AG04450 (cell line): ENCODE measurements at regions of chr14 and their contacts with region 1.

Region 1: DNA sequence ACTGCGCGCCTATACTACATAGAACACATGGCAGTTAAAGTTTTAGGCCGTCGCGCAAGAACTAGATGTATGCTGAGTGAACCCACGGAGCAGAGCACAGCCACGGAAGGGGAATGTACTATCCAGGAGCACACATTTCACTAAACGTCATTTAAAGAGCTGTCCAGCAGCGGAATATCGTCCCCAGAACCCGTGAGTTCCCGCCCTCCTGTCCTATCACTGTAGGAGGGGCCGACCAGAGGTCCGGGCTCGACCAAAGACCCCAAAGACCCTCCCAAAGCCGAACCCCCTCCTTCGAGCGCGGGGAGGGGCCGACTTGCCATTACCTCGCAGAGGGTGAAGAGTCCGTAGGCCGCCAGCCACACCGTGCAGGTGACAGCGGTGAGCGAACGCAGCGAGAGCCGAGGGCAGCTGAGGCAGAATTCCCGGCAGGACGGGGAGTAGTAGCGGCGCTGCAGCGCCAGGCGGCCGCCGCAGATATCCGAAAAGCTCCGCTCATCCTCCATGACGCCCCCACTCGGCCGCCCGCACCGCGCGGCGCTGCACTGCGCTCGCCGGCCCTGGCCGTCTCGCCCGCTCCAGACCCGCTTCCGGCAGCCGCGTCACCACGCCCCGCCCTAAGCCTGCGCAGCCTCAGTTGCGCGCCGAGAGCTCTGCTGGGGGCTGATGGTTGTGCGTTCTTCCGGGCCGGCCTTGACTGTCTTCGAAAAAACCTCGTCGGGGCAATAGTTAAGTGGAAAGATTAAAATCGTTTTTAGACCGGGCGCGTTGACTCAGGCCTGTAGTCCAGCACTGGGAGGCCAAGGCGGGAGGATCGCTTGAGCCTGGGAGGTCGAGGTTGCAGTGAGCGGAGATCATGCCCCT is at the start of gene PIGH:
- DNase-seq: peak; percentile 46
- H3K4me3 ChIP-seq: peak within 1 kb of the TSS; percentile 83
- H3K27ac ChIP-seq: peak within 1 kb of the TSS; percentile 68
- H3K27me3 ChIP-seq: no peaks in the 10 kb centered on the region
- CTCF ChIP-seq: peak; percentile 56
- polyA plus RNA-seq, gene PIGH: 16.0 and 17.6 TPM in 2 replicates

Region 2: GRCh38 chr14:67426983-67427606 is 172.8 kb before region 1 on chr14:
- CTCF ChIA-PET with region 1: interaction called, 16 read pairs
- POLR2A ChIA-PET with region 1: no interaction called
- DNase-seq: peak; percentile 45
- H3K4me3 ChIP-seq: no peak overlapping the region
- H3K27ac ChIP-seq: no peak overlapping the region
- H3K27me3 ChIP-seq: peaks cover 10% of the 10 kb centered on the region
- CTCF ChIP-seq: peak; percentile 86

Region 3: DNA sequence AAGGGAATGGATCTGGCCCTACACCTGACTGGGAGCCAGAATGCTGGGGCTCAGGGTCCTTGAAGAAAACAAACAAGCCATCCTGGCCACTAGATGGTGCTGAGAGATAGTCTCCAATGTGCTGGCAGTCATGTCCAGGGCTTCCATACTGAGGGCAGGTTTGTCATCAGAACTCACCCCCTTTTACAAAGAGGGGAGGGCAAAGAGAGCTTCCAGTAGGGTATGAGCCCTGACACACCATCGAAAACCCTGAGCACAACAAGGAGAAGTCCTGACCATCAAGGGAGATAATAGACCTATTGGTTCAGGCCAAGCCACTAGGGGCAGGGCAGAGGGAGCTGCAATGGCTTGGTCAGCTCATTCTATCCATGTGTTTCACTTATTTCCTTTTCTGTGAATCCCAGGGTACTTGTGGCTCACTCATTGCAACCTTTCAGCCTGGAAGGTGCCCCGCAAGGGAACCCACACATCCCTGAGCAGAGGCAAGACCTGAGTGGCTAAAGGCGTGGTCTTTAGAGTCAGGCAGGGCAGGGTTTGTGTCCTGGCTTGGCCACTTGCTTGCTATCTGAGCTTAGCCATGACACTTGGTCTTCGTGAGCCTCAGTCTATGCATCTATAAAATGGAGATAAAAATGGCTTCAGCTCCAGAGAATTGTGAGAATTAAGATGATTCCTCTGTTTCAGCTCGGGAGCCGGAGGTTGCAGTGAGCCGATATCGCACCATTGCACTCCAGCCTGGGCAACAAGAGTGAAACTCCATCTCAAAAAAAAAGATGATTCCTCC is 73.1 kb before region 1 on chr14:
- CTCF ChIA-PET with region 1: interaction called, 10 read pairs
- POLR2A ChIA-PET with region 1: no interaction called
- DNase-seq: no peak
- H3K4me3 ChIP-seq: no peak overlapping the region
- H3K27ac ChIP-seq: no peak overlapping the region
- H3K27me3 ChIP-seq: peaks cover 38% of the 10 kb centered on the region
- CTCF ChIP-seq: peak; percentile 72

Region 4: DNA sequence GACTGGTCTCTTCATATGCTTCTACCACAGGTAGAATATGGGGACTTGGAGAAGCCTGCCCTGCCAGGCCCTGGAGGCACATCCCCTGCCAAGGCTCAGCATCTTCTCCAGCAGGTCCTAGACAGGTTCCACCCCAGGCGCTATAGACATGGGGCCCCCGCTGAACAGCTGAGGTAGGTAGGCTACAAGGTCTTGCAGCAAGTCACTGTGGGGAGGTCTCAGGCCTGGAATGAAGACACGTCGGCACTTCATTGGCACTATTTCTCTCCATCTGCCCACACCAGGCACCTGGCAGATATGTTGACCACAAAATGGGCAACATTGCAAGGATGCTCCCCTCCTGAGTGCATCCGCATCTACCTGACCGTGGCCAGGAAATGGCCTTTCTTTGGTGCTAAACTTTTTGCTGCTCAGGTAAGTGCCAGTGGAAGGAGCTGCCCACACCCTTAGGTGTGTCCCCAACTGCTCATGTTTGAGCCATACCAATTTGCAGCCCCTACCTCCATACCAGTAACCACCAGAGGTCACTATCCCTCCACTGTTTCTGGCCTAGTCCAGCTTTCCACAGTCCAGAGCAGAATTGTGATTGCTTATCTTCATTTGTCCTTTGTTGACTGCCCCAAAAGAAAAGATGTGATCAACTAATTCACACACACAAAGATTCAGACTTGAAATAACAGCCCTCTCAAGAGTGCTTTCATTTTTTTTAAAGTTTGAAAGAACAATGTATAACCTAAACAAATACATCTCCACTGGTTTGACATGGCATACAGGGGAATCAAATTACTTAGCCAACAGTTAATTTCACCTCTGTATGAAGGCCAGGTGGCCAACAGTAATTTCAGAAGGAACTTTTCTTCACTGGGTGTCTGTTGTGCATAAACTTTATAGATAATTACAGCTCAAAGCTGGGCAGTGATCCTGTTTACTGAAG is 16.0 kb before region 1 on chr14:
- CTCF ChIA-PET with region 1: interaction called, 10 read pairs
- POLR2A ChIA-PET with region 1: no interaction called
- DNase-seq: no peak
- H3K4me3 ChIP-seq: no peak overlapping the region
- H3K27ac ChIP-seq: no peak overlapping the region
- H3K27me3 ChIP-seq: peaks cover 5% of the 10 kb centered on the region
- CTCF ChIP-seq: peak; percentile 85

Region 5: GRCh38 chr14:67589204-67589770 is 10.6 kb before region 1 on chr14:
- CTCF ChIA-PET with region 1: interaction called, 14 read pairs
- POLR2A ChIA-PET with region 1: no interaction called
- DNase-seq: no peak
- H3K4me3 ChIP-seq: no peak overlapping the region
- H3K27ac ChIP-seq: no peak overlapping the region
- H3K27me3 ChIP-seq: no peaks in the 10 kb centered on the region
- CTCF ChIP-seq: no peak

Region 6: DNA sequence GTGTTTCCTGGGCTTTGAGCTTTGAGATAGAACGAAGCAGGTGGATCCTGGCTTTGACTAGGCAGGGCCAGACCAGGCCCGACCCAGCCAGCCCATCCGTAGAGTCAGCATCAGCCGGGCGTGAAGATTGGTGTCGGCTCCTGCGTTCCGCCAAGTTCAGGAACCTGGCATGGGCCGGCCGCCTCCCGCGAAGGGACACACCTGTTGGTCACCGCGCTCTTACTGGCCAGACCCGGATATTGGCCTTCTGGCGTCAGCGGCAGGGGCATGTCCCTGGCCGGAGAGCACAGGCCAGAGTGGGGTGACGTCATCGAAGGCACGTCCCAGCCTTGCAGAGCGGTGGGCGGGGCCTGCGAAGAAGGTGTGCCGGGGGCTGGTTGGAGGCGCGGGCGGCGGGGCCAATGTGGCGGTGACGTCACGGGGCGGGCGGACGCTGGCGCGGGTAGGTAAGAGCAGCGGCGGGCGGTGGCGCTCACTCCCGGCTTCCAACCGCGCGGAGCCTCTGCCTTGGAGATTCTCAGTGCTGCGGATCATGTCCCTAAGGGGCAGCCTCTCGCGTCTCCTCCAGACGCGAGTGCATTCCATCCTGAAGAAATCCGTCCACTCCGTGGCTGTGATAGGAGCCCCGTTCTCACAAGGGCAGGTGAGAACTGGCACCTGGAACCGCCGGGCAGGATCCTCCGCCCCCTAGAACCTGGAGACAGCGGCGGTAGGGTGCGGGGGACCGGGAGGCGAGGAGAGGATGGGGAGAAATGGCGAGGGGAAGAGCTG is 19.7 kb after region 1 on chr14 and contains the start of gene ARG2:
- CTCF ChIA-PET with region 1: interaction called, 15 read pairs
- POLR2A ChIA-PET with region 1: interaction called, 4 read pairs
- DNase-seq: peak; percentile 61
- H3K4me3 ChIP-seq: peak within 1 kb of the TSS; percentile 67
- H3K27ac ChIP-seq: no peak within 1 kb of the TSS
- H3K27me3 ChIP-seq: no peaks in the 10 kb centered on the region
- CTCF ChIP-seq: no peak
- polyA plus RNA-seq, gene ARG2: 2.6 TPM in 2 replicates

Region 7: DNA sequence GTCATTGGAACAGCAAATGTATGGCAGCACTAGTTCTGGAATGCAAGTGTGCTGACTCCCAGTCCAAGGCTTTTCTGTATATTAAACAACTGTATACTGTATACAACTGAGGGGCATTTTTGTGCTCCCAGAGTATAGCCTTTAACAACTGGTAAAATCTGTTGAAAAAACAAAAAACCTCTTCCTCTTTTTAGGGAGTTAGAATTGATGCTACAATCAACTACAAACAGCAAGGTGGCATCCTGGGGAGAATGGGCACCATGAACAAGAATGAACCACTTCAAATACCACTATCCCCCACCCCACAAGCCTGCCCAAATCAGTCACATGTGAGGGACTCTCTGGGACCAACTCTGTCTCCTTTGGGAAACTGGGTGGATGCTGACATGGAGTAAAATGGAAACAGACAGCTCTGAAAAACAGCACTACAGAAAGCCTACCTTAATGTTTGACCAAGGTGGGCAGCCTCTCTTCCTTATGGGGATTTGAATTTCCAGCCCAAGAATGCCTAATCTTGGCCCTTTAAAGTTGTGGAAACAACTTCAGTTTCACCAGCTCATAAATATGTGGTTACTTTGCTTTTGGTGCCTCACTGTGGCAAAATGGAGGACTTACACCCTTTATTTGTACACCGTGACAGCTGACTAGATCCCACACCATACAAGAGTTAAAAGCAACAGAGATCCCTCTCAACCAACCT is 67.0 kb after region 1 on chr14:
- CTCF ChIA-PET with region 1: interaction called, 29 read pairs
- POLR2A ChIA-PET with region 1: interaction called, 3 read pairs
- DNase-seq: peak; percentile 43
- H3K4me3 ChIP-seq: no peak overlapping the region
- H3K27ac ChIP-seq: no peak overlapping the region
- H3K27me3 ChIP-seq: no peaks in the 10 kb centered on the region
- CTCF ChIP-seq: peak; percentile 70